ENCODE measurements at regions of chr17 and their contacts with region 1.

Region 1: DNA sequence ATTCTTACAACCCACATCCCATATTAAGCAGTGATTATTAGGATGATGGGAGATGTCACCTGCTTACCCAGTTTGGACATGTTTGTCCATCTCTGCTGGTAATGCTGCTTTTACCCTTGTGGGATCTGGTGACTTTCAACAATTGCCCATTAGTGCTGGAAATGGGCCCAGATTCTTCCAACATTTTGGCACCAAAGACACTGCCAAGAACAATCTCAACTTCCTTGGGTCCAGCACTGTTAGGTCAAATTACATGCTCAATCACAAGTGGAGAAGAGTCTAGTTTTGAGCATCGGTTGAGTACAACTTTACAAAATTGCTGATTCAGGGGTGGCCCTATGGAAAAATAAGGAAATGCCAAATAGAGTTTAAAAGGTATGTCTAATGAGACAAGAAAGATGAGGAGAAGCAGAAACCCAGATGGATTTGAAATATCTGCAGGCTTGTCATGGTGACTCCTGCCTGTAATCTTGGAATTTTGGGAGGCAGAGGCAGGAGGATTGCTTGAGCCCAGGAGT is 13.0 kb upstream of the ZFP3 start:
- DNase-seq: no peak
- ATAC-seq: no peak
- H3K4me3 ChIP-seq: no peak overlapping the region
- H3K27ac ChIP-seq: no peak overlapping the region
- H3K4me1 ChIP-seq: no peaks in the 10 kb centered on the region
- H3K27me3 ChIP-seq: no peaks in the 10 kb centered on the region
- CTCF ChIP-seq: no peak
- POLR2A ChIP-seq: no peak

Region 2: GRCh38 chr17:4881761-4882555 is 183.3 kb before region 1 on chr17:
- intact Hi-C with region 1: no loop called
- DNase-seq: peak; percentile 74 to 79 (median 75)
- ATAC-seq: peak; percentile 89 to 94 (median 90)
- H3K4me3 ChIP-seq: no peak overlapping the region
- H3K27ac ChIP-seq: no peak overlapping the region
- H3K4me1 ChIP-seq: no peaks in the 10 kb centered on the region
- H3K27me3 ChIP-seq: no peaks in the 10 kb centered on the region
- CTCF ChIP-seq: peak; percentile 74 to 91 (median 84)
- POLR2A ChIP-seq: no peak

Region 3: DNA sequence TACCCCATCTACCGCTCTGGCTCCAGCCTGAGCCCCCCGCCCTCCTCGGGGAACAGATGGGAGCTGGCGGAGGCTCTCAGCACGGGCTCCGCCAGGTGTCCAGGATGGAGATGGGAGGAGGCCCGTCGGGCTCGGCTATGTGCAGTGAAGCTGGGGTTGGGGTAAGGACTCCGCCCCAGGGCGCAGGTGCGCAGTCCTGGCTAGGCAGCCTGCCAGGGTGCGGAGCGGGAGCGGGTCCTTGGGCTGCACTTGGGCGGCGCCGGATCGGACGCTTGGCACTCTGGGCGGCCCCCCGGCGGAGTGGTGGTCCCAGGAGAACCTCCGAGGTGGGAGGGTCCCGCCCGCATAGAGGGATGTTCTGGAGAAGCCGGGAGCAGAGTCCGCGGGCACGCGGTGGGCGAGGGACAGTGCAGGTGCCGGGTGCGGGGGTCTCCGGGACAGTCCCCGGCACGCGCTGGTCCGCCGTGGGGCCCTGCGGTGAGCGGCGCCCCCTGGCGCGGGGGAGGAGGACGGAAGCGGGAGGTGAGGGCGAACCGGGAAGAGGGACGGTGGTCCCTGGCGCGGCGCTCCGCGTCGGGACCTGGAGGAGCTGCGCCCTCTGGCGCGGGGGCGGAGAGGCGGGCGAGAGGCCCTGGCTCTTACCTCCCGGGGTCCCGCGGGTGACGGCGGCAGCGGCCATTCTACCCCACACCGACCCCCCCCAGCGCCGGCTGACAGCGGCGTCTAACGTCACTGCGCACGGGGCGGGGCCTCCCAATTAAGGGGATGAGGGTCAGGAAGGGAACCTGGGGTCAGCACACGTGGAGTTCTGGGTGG is 78.1 kb before region 1 on chr17 and contains the start of gene CAMTA2:
- intact Hi-C with region 1: loop called (anchors 5 to 10 kb)
- DNase-seq: peak; percentile 90 to 92 (median 91)
- ATAC-seq: peak; percentile 88 to 92 (median 92)
- H3K4me3 ChIP-seq: peak within 1 kb of the TSS; percentile 65 to 98 (median 84)
- H3K27ac ChIP-seq: peak within 1 kb of the TSS; percentile 85 to 89 (median 87)
- H3K4me1 ChIP-seq: peaks cover 0 to 17% (median 2%) of the 10 kb centered on the region in 4 donors
- H3K27me3 ChIP-seq: no peaks in the 10 kb centered on the region
- CTCF ChIP-seq: peak; percentile 72 to 85 (median 77)
- POLR2A ChIP-seq: peak; percentile 67
- total RNA-seq, gene CAMTA2: 15.3 to 21.1 (median 17.7) TPM

Region 4: GRCh38 chr17:4997302-4998026 is 67.8 kb before region 1 on chr17 and contains the starts of genes INCA1 and KIF1C:
- intact Hi-C with region 1: no loop called
- DNase-seq: peak; percentile 97
- ATAC-seq: peak; percentile 89 to 94 (median 92)
- H3K4me3 ChIP-seq: peak within 1 kb of the TSS; percentile 95 to 99 (median 96)
- H3K27ac ChIP-seq: peak within 1 kb of the TSS; percentile 78 to 84 (median 82)
- H3K4me1 ChIP-seq: peaks cover 0 to 14% (median 6%) of the 10 kb centered on the region in 4 donors
- H3K27me3 ChIP-seq: no peaks in the 10 kb centered on the region
- CTCF ChIP-seq: peak in 1 of 4 donors; percentile 28
- POLR2A ChIP-seq: peak; percentile 70
- total RNA-seq, gene INCA1: 0.83 to 1.3 (median 0.97) TPM in 5 of 6 experiments, not detected in the other
- total RNA-seq, gene KIF1C: 59.8 to 112 (median 99.3) TPM